ENCODE measurements at regions of chr15 and their contacts with region 1.

Region 1: GRCh38 chr15:92226014-92226612 is 167.6 kb upstream of the ST8SIA2 start:
- DNase-seq: peak in 29 of 42 donors; percentile 4 to 74 (median 29)

Region 2: DNA sequence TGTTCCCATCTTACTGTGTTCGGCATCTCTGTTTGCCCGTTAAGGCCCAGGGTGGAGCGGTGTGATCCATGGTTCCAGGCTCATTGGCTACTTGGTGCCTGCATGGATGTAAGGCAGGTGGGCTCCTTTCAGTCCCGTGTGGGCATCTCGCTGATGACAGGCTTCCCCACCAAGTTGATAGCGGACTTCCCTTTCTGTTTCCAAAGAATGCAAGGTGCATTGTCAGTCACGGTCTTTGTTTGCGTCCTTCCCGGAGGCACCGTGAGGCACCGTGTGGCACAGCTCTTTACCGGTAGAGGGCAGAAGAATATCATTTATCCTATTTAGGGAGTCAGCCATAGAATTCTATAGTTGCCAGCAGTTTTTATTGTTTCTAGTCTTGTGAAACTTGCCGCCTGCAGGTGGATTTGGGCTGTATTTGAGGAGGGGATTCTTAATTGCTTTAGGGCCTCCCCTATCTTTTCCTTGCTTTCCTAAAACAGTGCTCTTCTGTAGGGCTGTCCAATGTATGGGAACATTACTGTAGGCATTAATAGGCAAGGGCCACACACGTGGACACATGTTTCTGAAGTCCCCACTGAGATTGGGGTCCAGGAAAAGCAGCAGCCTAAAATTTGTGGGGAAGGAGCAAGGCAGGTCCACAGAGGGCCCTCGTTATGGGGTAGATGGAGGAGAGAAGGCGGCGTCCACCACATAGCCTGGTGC is 128.5 kb before region 1 on chr15:
- intact Hi-C with region 1: loop called (anchors 5 kb)
- DNase-seq: peak in 40 of 42 donors; percentile 16 to 83 (median 57)

Region 3: GRCh38 chr15:92527197-92527596 is 301.1 kb after region 1 on chr15:
- intact Hi-C with region 1: no loop called
- DNase-seq: no peak

Measured in head of caudate nucleus (tissue), 42 donors.